Activated CD4-positive, alpha-beta T cell treated with anti-CD3 and anti-CD28 coated beads, Interleukin-2, amount 10 ng/mL, durations not matched to agents 24 days and 14 days (primary cell): ENCODE measurements at regions of chr20 and their contacts with region 1.

Region 1: GRCh38 chr20:47620808-47621805 is 119.4 kb downstream of the NCOA3 start:
- DNase-seq: peak; percentile 72
- H3K4me3 Mint-ChIP-seq: no peak overlapping the region
- H3K27ac Mint-ChIP-seq: no peak overlapping the region
- H3K4me1 Mint-ChIP-seq: peaks cover 27% of the 10 kb centered on the region
- H3K27me3 Mint-ChIP-seq: no peaks in the 10 kb centered on the region

Region 2: GRCh38 chr20:47205577-47206498 is 415.3 kb before region 1 on chr20:
- intact Hi-C with region 1: loop called (anchors 10 kb)
- DNase-seq: peak; percentile 89
- H3K4me3 Mint-ChIP-seq: no peak overlapping the region
- H3K27ac Mint-ChIP-seq: peak overlapping the region; percentile 30
- H3K4me1 Mint-ChIP-seq: peaks cover 8% of the 10 kb centered on the region
- H3K27me3 Mint-ChIP-seq: no peaks in the 10 kb centered on the region

Region 3: GRCh38 chr20:47389867-47390347 is 231.2 kb before region 1 on chr20:
- intact Hi-C with region 1: loop called (anchors 2 kb)
- DNase-seq: no peak
- H3K4me3 Mint-ChIP-seq: no peak overlapping the region
- H3K27ac Mint-ChIP-seq: peak overlapping the region; percentile 58
- H3K4me1 Mint-ChIP-seq: peaks cover 19% of the 10 kb centered on the region
- H3K27me3 Mint-ChIP-seq: no peaks in the 10 kb centered on the region

Region 4: DNA sequence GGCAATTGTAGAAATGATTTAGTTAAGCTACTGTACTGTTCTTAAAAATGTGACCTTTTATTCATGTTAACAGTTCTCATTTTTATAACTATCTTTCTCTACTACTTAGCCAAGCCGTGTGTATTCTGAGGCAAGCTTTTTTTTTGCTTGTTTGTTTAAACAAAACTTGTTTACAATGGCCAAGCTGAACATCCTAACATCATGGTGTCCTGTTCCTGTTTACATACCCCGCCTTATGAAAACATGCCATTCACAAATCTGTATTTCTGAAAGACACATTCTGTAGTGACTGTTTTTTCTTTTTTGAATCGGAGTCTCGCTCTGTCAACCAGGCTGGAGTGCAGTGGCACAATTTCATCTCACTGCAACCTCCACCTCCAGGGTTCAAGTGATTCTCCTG is 21.5 kb after region 1 on chr20:
- intact Hi-C with region 1: no loop called
- DNase-seq: no peak
- H3K4me3 Mint-ChIP-seq: no peak overlapping the region
- H3K27ac Mint-ChIP-seq: peak overlapping the region; percentile 17
- H3K4me1 Mint-ChIP-seq: peaks cover 6% of the 10 kb centered on the region
- H3K27me3 Mint-ChIP-seq: no peaks in the 10 kb centered on the region

Region 5: DNA sequence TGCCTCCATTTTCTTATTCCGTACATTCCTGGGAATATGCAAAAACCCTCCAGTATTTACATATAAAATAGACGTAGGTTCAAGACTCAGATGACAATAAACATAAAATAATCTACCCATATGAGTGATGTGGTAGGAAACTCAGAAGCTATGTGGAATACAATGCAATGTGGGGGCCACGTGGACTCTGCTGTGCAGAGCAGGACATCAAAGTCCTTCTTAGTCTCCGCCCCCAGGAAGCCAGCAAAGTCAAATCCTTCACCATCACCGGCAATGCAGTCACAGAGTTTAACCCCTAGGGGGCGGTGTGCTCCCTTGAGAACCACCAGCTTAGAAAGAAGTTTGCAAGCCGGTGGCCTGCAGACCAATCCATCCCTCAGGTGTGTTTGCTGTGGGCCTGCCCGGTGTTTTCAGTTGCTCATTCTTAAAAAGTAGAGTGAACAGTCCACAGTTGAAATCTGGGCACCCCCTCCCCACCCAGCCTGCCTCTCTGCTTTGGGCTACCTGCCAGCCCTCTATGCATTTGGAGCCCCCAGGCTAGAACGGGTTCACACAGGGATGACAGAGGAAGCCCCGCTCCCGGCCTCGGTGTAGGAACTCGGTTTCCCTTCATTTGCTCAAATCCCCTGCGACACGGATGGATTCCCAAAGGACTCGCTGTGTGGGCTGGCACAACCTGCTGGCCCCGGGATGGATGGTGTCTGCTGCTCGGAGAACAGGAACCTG is 104.3 kb after region 1 on chr20:
- intact Hi-C with region 1: no loop called
- DNase-seq: peak; percentile 96
- H3K4me3 Mint-ChIP-seq: no peak overlapping the region
- H3K27ac Mint-ChIP-seq: peak overlapping the region; percentile 26
- H3K4me1 Mint-ChIP-seq: peaks cover 46% of the 10 kb centered on the region
- H3K27me3 Mint-ChIP-seq: no peaks in the 10 kb centered on the region